HepG2 (cell line): ENCODE measurements at regions of chr9 and their contacts with region 1.

Region 1: GRCh38 chr9:115013998-115014397 is 83.6 kb upstream of the TNFSF8 start:
- DNase-seq: peak; percentile 31
- ATAC-seq: peak; percentile 84
- H3K4me3 ChIP-seq: no peak overlapping the region
- H3K27ac ChIP-seq: no peak overlapping the region
- H3K4me1 ChIP-seq: no peaks in the 10 kb centered on the region
- H3K27me3 ChIP-seq: peaks cover 0 to 5% of the 10 kb centered on the region in 2 experiments; a peak in 1 of 5 replicates
- CTCF ChIP-seq: peak; percentile 84
- EP300 ChIP-seq: no peak
- POLR2A ChIP-seq: no peak
- RAD21 ChIP-seq: peak; percentile 71

Region 2: DNA sequence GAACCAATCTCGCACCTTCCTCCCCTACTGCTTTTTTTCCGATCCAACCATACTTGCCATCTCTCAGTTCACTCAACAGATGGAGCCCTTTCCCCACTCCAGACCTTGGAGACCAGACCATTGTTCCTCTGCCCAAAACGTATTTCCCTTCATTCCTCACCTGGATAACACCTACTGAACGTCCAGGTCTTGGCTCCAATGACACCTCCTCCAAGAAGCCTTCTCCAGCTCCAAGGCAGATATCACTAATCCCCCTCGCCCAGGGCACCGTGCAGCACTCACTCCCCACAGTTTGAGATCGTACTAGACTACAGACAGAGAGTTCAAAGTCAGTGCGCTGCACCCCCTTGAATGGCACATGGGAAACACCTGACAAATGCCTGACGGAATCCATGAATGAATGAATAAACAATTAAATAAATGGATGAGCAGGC is 579.1 kb before region 1 on chr9:
- CTCF ChIA-PET with region 1: no interaction called
- POLR2A ChIA-PET with region 1: no interaction called
- in situ Hi-C with region 1: loop called (anchors 25 kb)
- intact Hi-C with region 1: no loop called
- DNase-seq: peak; percentile 33
- ATAC-seq: peak; percentile 87
- H3K4me3 ChIP-seq: no peak overlapping the region
- H3K27ac ChIP-seq: no peak overlapping the region
- H3K4me1 ChIP-seq: peaks cover 29% of the 10 kb centered on the region
- H3K27me3 ChIP-seq: no peaks in the 10 kb centered on the region
- CTCF ChIP-seq: peak; percentile 89
- EP300 ChIP-seq: no peak
- POLR2A ChIP-seq: no peak
- RAD21 ChIP-seq: peak; percentile 75

Region 3: GRCh38 chr9:114681594-114682332 is 332.2 kb before region 1 on chr9 and contains the start of gene TEX48:
- CTCF ChIA-PET with region 1: interaction called, 46 read pairs
- POLR2A ChIA-PET with region 1: no interaction called
- in situ Hi-C with region 1: loop called (anchors 5 kb)
- intact Hi-C with region 1: loop called (anchors 1 kb)
- DNase-seq: peak; percentile 80
- ATAC-seq: peak; percentile 99
- H3K4me3 ChIP-seq: no peak within 1 kb of the TSS
- H3K27ac ChIP-seq: no peak within 1 kb of the TSS
- H3K4me1 ChIP-seq: peaks cover 8% of the 10 kb centered on the region
- H3K27me3 ChIP-seq: no peaks in the 10 kb centered on the region
- CTCF ChIP-seq: peak; percentile 91
- EP300 ChIP-seq: no peak
- POLR2A ChIP-seq: no peak
- RAD21 ChIP-seq: peak; percentile 84
- total RNA-seq, gene TEX48: not detected in 2 replicates

Region 4: DNA sequence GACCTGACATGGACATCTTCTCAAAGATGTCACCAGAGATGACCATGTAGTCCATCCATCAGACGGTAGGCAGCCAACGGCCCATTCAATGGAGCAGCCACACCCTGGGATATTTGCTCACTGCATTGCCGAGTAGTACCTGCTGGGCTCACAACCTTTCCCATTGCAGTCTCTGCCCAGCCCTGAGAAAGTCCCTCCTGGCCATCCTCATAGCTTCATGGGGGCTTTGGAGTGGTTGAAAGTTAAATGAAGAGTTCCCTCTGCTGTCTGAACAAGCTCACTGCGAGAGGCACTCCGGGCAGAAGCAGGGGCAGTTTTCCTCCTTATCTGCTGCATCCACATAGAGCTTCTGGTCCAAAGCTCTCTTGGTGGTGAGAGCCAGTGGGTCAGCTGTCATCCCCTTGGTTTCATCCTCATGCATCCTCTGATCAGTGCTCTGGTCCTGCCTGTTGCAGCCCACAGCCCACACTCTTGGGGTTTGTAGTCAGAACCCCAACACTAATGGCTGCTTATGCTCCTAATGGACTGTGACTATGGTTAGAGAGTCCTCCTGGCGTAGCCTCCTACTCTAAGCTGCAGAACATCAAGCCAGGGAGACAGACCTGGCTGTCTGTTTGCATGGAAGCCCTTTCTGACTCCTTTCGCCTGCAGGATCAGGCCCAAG is 107.0 kb before region 1 on chr9:
- CTCF ChIA-PET with region 1: no interaction called
- POLR2A ChIA-PET with region 1: no interaction called
- in situ Hi-C with region 1: loop called (anchors 5 kb)
- intact Hi-C with region 1: loop called (anchors 1 kb)
- DNase-seq: peak; percentile 55
- ATAC-seq: peak; percentile 86
- H3K4me3 ChIP-seq: no peak overlapping the region
- H3K27ac ChIP-seq: no peak overlapping the region
- H3K4me1 ChIP-seq: peaks cover 24% of the 10 kb centered on the region
- H3K27me3 ChIP-seq: no peaks in the 10 kb centered on the region
- CTCF ChIP-seq: peak; percentile 82
- EP300 ChIP-seq: no peak
- POLR2A ChIP-seq: no peak
- RAD21 ChIP-seq: peak; percentile 69

Region 5: GRCh38 chr9:115035841-115036612 is 22.0 kb after region 1 on chr9:
- CTCF ChIA-PET with region 1: no interaction called
- POLR2A ChIA-PET with region 1: no interaction called
- in situ Hi-C with region 1: no loop called
- intact Hi-C with region 1: no loop called
- DNase-seq: no peak
- ATAC-seq: no peak
- H3K4me3 ChIP-seq: no peak overlapping the region
- H3K27ac ChIP-seq: no peak overlapping the region
- H3K4me1 ChIP-seq: no peaks in the 10 kb centered on the region
- H3K27me3 ChIP-seq: no peaks in the 10 kb centered on the region
- CTCF ChIP-seq: no peak
- EP300 ChIP-seq: no peak
- POLR2A ChIP-seq: no peak
- RAD21 ChIP-seq: no peak